ENCODE measurements at regions of chr1 and their contacts with region 1.

Region 1: DNA sequence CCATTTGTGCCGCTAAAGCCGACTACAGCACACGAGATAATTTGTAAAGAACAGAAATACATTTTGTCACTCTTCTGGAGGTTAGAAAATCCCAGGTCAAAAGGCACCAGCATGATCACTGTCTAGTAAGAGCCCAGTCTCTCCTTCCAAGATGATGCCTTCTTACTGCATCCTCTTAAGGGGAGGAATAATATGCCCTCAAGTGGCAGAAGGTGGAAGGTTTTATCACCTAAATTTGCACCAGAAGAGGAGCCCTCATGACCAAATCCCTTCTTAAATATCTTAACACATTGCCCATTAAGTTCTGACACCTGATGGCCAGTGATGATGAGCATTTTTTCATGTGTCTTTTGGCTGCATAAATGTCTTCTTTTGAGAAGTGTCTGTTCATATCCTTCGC is 326.7 kb upstream of the RGS18 start:
- DNase-seq: no peak
- ATAC-seq: no peak
- H3K4me3 ChIP-seq: no peak overlapping the region
- H3K4me3 Mint-ChIP-seq: no peak overlapping the region
- H3K27ac ChIP-seq: no peak overlapping the region
- H3K27ac Mint-ChIP-seq: no peak overlapping the region
- H3K4me1 ChIP-seq: no peaks in the 10 kb centered on the region
- H3K4me1 Mint-ChIP-seq: no peaks in the 10 kb centered on the region
- H3K27me3 ChIP-seq: no peaks in the 10 kb centered on the region
- H3K27me3 Mint-ChIP-seq: no peaks in the 10 kb centered on the region
- CTCF ChIP-seq: no peak

Region 2: DNA sequence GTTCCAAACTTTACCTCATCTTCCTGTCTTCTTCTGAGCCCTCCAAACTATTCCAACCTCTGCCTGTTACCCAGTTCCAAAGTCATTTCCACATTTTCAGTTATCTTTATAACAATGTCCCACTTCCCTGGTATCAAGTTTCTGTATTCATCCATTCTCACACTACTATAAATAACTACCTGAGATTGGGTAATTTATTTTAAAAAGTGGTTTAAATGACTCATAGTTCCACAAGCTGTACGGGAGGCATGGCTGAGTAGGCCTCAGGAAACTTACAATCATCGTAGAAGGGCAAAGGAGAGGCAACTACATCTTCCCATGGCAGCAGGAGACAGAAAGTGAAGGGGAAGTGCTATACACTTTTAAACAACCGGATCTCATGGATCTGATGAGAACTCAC is 101.8 kb before region 1 on chr1:
- CTCF ChIA-PET with region 1: no interaction called
- POLR2A ChIA-PET with region 1: no interaction called
- intact Hi-C with region 1: no loop called
- DNase-seq: no peak
- ATAC-seq: no peak
- H3K4me3 ChIP-seq: no peak overlapping the region
- H3K4me3 Mint-ChIP-seq: no peak overlapping the region
- H3K27ac ChIP-seq: no peak overlapping the region
- H3K27ac Mint-ChIP-seq: no peak overlapping the region
- H3K4me1 ChIP-seq: no peaks in the 10 kb centered on the region
- H3K4me1 Mint-ChIP-seq: no peaks in the 10 kb centered on the region
- H3K27me3 ChIP-seq: no peaks in the 10 kb centered on the region
- H3K27me3 Mint-ChIP-seq: no peaks in the 10 kb centered on the region
- CTCF ChIP-seq: no peak

Region 3: GRCh38 chr1:191788551-191788950 is 43.0 kb before region 1 on chr1:
- CTCF ChIA-PET with region 1: no interaction called
- POLR2A ChIA-PET with region 1: no interaction called
- intact Hi-C with region 1: loop called in 1 of 2 experiments (anchors 2 kb)
- DNase-seq: no peak
- ATAC-seq: no peak
- H3K4me3 ChIP-seq: no peak overlapping the region
- H3K4me3 Mint-ChIP-seq: no peak overlapping the region
- H3K27ac ChIP-seq: no peak overlapping the region
- H3K27ac Mint-ChIP-seq: no peak overlapping the region
- H3K4me1 ChIP-seq: no peaks in the 10 kb centered on the region
- H3K4me1 Mint-ChIP-seq: no peaks in the 10 kb centered on the region
- H3K27me3 ChIP-seq: no peaks in the 10 kb centered on the region
- H3K27me3 Mint-ChIP-seq: no peaks in the 10 kb centered on the region
- CTCF ChIP-seq: no peak

Region 4: GRCh38 chr1:191818198-191818597 is 13.4 kb before region 1 on chr1:
- CTCF ChIA-PET with region 1: no interaction called
- POLR2A ChIA-PET with region 1: no interaction called
- intact Hi-C with region 1: no loop called
- DNase-seq: no peak
- ATAC-seq: no peak
- H3K4me3 ChIP-seq: no peak overlapping the region
- H3K4me3 Mint-ChIP-seq: no peak overlapping the region
- H3K27ac ChIP-seq: no peak overlapping the region
- H3K27ac Mint-ChIP-seq: no peak overlapping the region
- H3K4me1 ChIP-seq: no peaks in the 10 kb centered on the region
- H3K4me1 Mint-ChIP-seq: no peaks in the 10 kb centered on the region
- H3K27me3 ChIP-seq: no peaks in the 10 kb centered on the region
- H3K27me3 Mint-ChIP-seq: no peaks in the 10 kb centered on the region
- CTCF ChIP-seq: no peak